ENCODE measurements at regions of chr1 and their contacts with region 1.

Region 1: GRCh38 chr1:75991497-75992114 is 59.4 kb upstream of the ASB17 start:
- DNase-seq: peak; percentile 22 to 80 (median 71)
- ATAC-seq: peak; percentile 34
- H3K4me3 ChIP-seq: no peak overlapping the region
- H3K4me3 Mint-ChIP-seq: no peak overlapping the region
- H3K27ac ChIP-seq: no peak overlapping the region
- H3K27ac Mint-ChIP-seq: no peak overlapping the region
- H3K4me1 ChIP-seq: no peaks in the 10 kb centered on the region
- H3K4me1 Mint-ChIP-seq: no peaks in the 10 kb centered on the region
- H3K27me3 ChIP-seq: peaks cover 0 to 2% of the 10 kb centered on the region in 2 experiments
- H3K27me3 Mint-ChIP-seq: peaks cover 3% of the 10 kb centered on the region
- CTCF ChIP-seq: peak; percentile 70

Region 2: GRCh38 chr1:75449998-75450397 is 541.6 kb before region 1 on chr1:
- CTCF ChIA-PET with region 1: no interaction called
- POLR2A ChIA-PET with region 1: no interaction called
- intact Hi-C with region 1: no loop called
- DNase-seq: no peak
- ATAC-seq: no peak
- H3K4me3 ChIP-seq: no peak overlapping the region
- H3K4me3 Mint-ChIP-seq: no peak overlapping the region
- H3K27ac ChIP-seq: no peak overlapping the region
- H3K27ac Mint-ChIP-seq: no peak overlapping the region
- H3K4me1 ChIP-seq: no peaks in the 10 kb centered on the region
- H3K4me1 Mint-ChIP-seq: no peaks in the 10 kb centered on the region
- H3K27me3 ChIP-seq: no peaks in the 10 kb centered on the region
- H3K27me3 Mint-ChIP-seq: no peaks in the 10 kb centered on the region
- CTCF ChIP-seq: no peak

Region 3: DNA sequence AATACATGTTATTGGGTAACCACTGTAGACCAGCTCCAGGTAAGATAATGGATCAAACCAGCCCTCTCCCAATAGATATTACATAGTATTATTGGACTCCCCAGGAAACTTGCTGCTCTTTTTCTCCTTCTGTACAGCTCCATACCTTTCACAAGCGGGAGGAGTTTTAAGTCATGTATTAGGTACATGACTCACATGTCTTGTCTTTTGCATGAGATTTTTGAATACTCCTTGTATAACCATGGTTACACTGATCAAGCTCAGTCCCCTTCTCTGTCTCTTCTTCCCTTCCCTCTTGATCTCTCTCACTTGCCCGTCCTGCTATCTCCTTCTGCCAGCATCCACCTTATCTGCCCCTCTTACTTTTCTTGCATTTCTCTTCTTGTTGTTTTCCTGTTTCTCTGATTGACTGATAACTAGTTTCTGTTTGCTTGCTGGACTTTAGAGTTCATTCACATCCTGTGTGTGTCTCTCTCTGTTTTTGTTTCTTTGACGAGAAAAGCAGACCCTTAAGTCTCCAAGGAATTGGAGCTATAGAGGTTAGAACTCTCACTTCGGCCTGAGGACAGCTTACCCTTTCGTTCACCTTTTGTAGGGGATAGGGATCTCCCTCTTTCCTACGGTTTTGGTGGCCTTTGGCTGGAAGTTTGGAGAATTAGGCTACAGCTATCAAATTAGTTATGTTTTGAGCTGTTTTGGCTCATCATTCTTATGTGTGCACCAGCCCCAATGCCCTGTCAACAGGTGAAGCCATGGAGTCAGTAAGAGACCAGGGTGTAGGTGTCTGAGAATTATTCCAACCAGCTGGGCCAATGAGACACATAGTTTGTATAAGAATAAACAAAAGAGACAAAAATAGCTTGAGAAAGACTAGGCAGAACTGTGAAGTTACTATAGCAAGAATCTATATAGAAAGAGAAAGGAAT is 10.4 kb before region 1 on chr1:
- CTCF ChIA-PET with region 1: interaction called, 16 read pairs
- POLR2A ChIA-PET with region 1: no interaction called
- intact Hi-C with region 1: no loop called
- DNase-seq: no peak
- ATAC-seq: no peak
- H3K4me3 ChIP-seq: no peak overlapping the region
- H3K4me3 Mint-ChIP-seq: no peak overlapping the region
- H3K27ac ChIP-seq: no peak overlapping the region
- H3K27ac Mint-ChIP-seq: no peak overlapping the region
- H3K4me1 ChIP-seq: no peaks in the 10 kb centered on the region
- H3K4me1 Mint-ChIP-seq: no peaks in the 10 kb centered on the region
- H3K27me3 ChIP-seq: no peaks in the 10 kb centered on the region
- H3K27me3 Mint-ChIP-seq: peaks cover 4% of the 10 kb centered on the region
- CTCF ChIP-seq: no peak

Region 4: DNA sequence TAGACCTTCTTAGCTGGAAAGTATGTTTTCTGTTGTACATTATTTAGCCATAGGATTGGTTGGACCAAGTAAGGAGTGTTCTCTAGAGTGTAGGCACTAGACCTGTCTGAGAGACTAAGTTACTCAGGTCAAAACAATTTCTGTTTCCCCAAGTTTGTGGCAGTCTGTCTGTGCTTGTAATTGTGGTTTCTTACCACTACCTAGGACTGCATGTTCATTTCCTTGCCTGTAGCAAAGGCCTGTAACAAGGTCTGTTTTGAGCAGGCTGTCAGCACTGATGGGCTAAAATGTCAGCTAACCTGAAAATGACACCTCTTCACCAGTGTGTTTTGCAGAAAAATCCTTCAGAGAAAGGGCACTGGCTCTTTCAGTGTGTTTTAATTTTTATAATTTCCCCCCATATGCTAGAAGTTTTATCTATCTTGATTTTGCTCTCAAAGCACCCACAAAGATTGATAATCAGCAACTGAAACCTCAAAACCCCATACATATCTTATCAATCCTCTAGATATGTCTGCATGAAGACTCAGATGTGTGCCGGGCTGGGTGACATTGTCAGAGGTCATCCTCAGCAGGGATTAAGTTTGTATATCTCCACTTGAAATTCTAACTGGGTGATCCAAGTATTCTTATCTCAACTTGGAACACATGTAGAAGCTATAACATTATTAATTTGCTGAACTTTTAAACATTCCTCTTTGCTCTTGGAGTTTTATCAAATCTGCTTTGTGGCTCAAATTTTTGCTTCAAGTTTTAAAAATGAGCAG is 32.2 kb after region 1 on chr1:
- CTCF ChIA-PET with region 1: no interaction called
- POLR2A ChIA-PET with region 1: no interaction called
- intact Hi-C with region 1: no loop called
- DNase-seq: peak in 3 of 9 experiments; percentile 11 to 48 (median 27)
- ATAC-seq: peak; percentile 71
- H3K4me3 ChIP-seq: no peak overlapping the region
- H3K4me3 Mint-ChIP-seq: no peak overlapping the region
- H3K27ac ChIP-seq: peak overlapping the region; percentile 3 to 12
- H3K27ac Mint-ChIP-seq: peak overlapping the region; percentile 87
- H3K4me1 ChIP-seq: peaks cover 22% of the 10 kb centered on the region
- H3K4me1 Mint-ChIP-seq: peaks cover 20% of the 10 kb centered on the region
- H3K27me3 ChIP-seq: no peaks in the 10 kb centered on the region
- H3K27me3 Mint-ChIP-seq: no peaks in the 10 kb centered on the region
- CTCF ChIP-seq: no peak

Region 5: DNA sequence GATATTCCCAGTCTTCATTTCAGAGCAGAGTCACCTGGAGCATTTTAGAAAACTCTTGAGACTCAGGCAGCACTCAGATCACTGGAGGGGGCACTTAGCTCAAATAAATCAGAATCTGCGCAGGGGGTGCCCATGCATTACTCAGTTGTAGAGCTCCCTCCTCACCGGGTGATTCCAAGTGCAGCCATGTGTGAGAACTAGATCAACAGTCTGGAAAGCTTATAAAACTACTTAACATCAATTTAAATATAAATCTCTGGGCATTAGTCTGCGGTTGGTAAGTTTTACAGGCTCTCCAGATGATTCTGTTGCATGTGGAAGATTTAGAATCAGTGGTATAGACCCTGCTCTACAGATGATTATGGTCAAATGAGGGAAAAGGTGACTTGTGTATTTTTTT is 211.5 kb after region 1 on chr1:
- CTCF ChIA-PET with region 1: no interaction called
- POLR2A ChIA-PET with region 1: no interaction called
- intact Hi-C with region 1: no loop called
- DNase-seq: no peak
- ATAC-seq: no peak
- H3K4me3 ChIP-seq: no peak overlapping the region
- H3K4me3 Mint-ChIP-seq: no peak overlapping the region
- H3K27ac ChIP-seq: no peak overlapping the region
- H3K27ac Mint-ChIP-seq: no peak overlapping the region
- H3K4me1 ChIP-seq: no peaks in the 10 kb centered on the region
- H3K4me1 Mint-ChIP-seq: no peaks in the 10 kb centered on the region
- H3K27me3 ChIP-seq: no peaks in the 10 kb centered on the region
- H3K27me3 Mint-ChIP-seq: no peaks in the 10 kb centered on the region
- CTCF ChIP-seq: no peak

Region 6: DNA sequence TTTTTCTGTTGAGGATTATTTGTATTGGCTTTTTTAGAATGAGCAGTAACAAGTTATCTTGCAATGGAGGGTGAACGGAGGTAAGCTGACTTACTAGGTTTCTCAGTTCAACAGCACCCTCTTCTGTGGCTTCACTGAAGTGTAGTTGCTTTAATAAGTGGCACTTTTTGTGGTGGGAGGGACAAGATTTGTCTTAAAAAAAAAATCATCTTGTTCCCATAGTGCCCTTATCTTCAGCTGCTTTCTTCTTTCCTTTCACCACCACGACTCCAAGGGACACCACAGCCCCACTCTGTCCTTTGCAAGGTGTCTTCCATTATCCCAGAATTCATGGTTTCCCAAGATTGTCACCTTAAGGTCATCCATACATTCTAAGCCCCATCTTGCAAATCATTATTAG is 1134.7 kb after region 1 on chr1:
- CTCF ChIA-PET with region 1: no interaction called
- POLR2A ChIA-PET with region 1: no interaction called
- intact Hi-C with region 1: loop called (anchors 2 to 5 kb)
- DNase-seq: peak in 3 of 9 experiments; percentile 25 to 62 (median 42)
- ATAC-seq: no peak
- H3K4me3 ChIP-seq: no peak overlapping the region
- H3K4me3 Mint-ChIP-seq: no peak overlapping the region
- H3K27ac ChIP-seq: no peak overlapping the region
- H3K27ac Mint-ChIP-seq: no peak overlapping the region
- H3K4me1 ChIP-seq: no peaks in the 10 kb centered on the region
- H3K4me1 Mint-ChIP-seq: no peaks in the 10 kb centered on the region
- H3K27me3 ChIP-seq: no peaks in the 10 kb centered on the region
- H3K27me3 Mint-ChIP-seq: no peaks in the 10 kb centered on the region
- CTCF ChIP-seq: peak; percentile 25

Region 7: GRCh38 chr1:77888081-77888780 is 1896.6 kb after region 1 on chr1 and contains the start of gene NEXN:
- CTCF ChIA-PET with region 1: no interaction called
- POLR2A ChIA-PET with region 1: no interaction called
- intact Hi-C with region 1: loop called in 1 of 2 experiments (anchors 2 kb)
- DNase-seq: peak in 1 of 9 experiments; percentile 1
- ATAC-seq: no peak
- H3K4me3 ChIP-seq: peak within 1 kb of the TSS; percentile 15 to 26
- H3K4me3 Mint-ChIP-seq: peak within 1 kb of the TSS; percentile 64
- H3K27ac ChIP-seq: no peak within 1 kb of the TSS
- H3K27ac Mint-ChIP-seq: no peak within 1 kb of the TSS
- H3K4me1 ChIP-seq: peaks cover 9% of the 10 kb centered on the region
- H3K4me1 Mint-ChIP-seq: peaks cover 12% of the 10 kb centered on the region
- H3K27me3 ChIP-seq: peaks cover 0 to 5% of the 10 kb centered on the region in 2 experiments
- H3K27me3 Mint-ChIP-seq: peaks cover 20% of the 10 kb centered on the region
- CTCF ChIP-seq: no peak
- total RNA-seq, gene NEXN: 0.17 TPM in 1 of 2 experiments, not detected in the other

Measured in CD8-positive, alpha-beta T cell (primary cell).